ENCODE measurements at regions of chr22 and their contacts with region 1.

Region 1: DNA sequence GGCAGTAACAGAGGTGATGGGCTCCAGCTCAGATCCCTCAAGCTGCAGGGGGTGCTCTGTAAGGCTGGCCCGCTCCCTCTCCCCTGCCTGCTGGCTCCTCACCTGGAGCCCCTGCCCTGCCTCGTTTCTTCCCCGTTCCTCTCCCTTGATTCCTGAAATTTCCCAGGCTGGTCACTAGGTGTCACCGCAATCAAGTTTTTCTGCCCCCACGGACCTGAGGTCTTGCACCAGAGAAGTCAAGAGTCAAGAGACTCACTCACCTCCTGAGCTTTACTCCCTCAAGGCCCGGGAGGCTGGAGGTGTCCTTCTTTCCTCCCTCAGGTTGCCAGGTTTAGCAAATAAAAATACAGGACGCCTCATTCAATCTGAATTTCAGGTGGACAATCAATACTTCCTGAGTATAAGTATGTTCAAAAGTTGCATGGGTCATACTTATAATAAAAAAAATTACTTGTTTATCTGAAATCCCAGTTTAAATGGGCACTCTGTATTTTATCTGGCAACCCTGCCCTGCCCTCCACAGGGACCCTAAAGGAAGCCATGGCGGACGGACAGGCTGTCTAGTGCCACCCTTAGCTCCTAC is 69.2 kb downstream of the SCUBE1 start:
- DNase-seq: peak; percentile 87
- CTCF ChIP-seq: peak; percentile 84

Region 2: GRCh38 chr22:43100211-43100610 is 173.8 kb before region 1 on chr22:
- in situ Hi-C with region 1: no loop called
- DNase-seq: no peak
- CTCF ChIP-seq: no peak

Region 3: GRCh38 chr22:43346521-43346929 is 72.5 kb after region 1 on chr22:
- in situ Hi-C with region 1: loop called (anchors 10 kb)
- DNase-seq: peak; percentile 86
- CTCF ChIP-seq: peak; percentile 77

Region 4: DNA sequence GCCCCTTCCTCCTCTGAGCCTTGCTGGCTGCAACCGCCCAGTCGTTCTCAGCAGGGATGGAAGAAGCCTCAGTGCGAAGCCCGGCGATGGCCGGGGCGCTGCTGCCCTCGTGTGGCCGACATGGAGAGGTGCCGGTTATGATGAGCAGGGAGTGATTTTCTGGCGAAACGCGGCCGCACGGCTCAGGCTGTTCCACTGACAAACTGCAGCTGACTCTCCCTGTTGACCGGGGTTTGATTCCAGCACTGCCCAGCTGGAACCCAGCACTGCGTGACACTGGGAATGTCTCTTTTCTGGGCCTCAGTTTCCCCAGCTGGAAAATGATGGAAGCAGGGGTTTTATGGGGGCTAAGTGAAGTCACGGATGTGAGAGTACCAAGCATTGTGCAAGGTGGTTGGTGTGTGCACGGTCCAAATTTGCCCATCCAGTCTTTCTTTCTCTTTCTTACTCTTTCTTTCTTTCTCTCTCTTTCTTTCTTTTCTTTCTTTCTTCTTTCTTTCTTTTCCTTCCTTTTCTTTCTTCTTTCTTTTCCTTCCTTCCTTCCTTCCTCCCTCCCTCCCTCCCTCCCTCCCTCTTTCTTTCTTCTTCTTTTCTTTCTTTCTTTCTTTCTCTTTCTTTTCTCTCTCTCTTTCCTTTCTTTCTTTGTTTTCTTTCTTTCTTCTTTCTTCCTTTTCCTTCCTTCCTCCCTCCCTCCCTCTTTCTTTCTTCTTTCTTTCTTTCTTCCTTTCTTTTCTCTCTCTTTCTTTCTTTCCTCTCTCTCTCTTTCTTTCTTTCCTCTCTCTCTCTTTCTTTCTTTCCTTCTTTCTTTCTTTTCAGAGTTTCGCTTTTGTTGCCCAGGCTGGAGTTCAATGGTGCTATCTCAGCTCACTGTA is 112.0 kb after region 1 on chr22:
- in situ Hi-C with region 1: loop called (anchors 10 kb)
- DNase-seq: peak; percentile 91
- CTCF ChIP-seq: peak; percentile 85